ENCODE measurements at regions of chr15 and their contacts with region 1.

Region 1: DNA sequence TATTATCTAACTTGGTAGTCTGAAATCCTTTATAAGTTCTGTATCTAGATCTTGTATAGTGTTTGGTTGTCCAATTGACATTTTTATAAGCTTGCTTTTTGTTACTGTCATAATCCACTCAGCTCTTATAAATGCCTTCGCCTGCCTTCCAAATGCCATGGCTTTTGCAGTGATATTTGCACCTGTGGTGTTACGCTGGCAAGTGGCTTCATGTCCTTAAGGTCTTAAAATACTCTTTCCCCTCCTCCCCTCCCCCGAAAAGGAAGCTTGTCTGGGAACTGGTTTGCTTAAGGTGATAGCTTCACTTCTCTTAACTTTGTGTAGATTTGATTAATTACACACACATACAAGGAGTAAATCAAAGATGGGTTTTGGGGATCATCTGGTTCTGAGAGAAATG is 62.0 kb downstream of the ABHD2 start:
- DNase-seq: no peak
- H3K4me3 Mint-ChIP-seq: no peak overlapping the region
- H3K27ac Mint-ChIP-seq: no peak overlapping the region
- H3K4me1 Mint-ChIP-seq: no peaks in the 10 kb centered on the region
- H3K27me3 Mint-ChIP-seq: no peaks in the 10 kb centered on the region
- CTCF ChIP-seq: no peak

Region 2: GRCh38 chr15:88878720-88879184 is 271.5 kb before region 1 on chr15:
- CTCF ChIA-PET with region 1: no interaction called
- POLR2A ChIA-PET with region 1: no interaction called
- intact Hi-C with region 1: no loop called
- DNase-seq: peak; percentile 55
- H3K4me3 Mint-ChIP-seq: no peak overlapping the region
- H3K27ac Mint-ChIP-seq: no peak overlapping the region
- H3K4me1 Mint-ChIP-seq: no peaks in the 10 kb centered on the region
- H3K27me3 Mint-ChIP-seq: no peaks in the 10 kb centered on the region
- CTCF ChIP-seq: peak; percentile 52

Region 3: GRCh38 chr15:89129123-89129815 is 21.0 kb before region 1 on chr15:
- CTCF ChIA-PET with region 1: interaction called, 12 read pairs
- POLR2A ChIA-PET with region 1: interaction called, 3 read pairs
- intact Hi-C with region 1: no loop called
- DNase-seq: peak; percentile 60
- H3K4me3 Mint-ChIP-seq: no peak overlapping the region
- H3K27ac Mint-ChIP-seq: no peak overlapping the region
- H3K4me1 Mint-ChIP-seq: peaks cover 5% of the 10 kb centered on the region
- H3K27me3 Mint-ChIP-seq: no peaks in the 10 kb centered on the region
- CTCF ChIP-seq: peak; percentile 65

Region 4: DNA sequence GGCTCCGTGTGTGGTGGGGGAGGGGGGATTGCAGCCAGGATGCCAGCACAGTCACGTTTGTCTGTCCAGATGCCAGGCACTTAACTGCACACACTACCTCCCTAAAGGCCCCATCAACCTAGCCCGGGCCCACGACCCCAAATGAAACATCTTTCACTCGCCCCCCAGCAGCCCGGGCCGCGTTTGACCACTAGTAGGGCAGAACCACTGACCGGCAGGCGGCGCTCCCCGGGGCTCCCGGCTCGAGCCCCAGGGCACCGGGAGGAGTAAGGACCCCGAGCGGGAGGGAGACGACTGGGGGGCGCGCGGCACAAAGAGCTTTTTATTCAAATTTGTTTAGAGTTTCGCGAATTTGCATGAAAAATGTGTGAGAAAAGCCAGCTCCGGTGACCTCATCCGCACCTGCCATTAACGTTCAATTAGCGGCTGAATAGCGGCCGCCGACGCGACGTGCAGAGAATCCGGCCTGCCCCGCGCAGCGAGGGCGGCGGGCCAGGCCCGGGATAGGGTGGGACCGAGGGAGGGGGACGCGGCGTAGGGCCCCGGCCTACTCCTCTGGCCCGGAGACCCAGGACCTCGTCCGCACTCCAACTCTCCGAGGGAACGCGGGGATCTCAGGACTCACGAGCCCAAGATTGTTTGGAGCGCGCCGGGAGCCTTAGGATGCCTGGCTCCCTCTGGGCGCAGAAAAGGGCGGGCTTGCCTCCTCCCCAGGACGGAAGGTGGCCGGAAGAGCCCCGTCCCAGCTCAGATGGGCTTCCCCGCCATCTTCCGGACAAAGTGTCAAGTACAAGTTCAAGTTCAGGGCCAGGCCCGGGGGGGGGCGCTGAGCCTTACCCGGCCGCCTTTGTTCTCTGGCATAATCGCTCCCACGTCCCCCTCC is 249.2 kb after region 1 on chr15:
- CTCF ChIA-PET with region 1: no interaction called
- POLR2A ChIA-PET with region 1: no interaction called
- intact Hi-C with region 1: no loop called
- DNase-seq: no peak
- H3K4me3 Mint-ChIP-seq: no peak overlapping the region
- H3K27ac Mint-ChIP-seq: no peak overlapping the region
- H3K4me1 Mint-ChIP-seq: peaks cover 26% of the 10 kb centered on the region
- H3K27me3 Mint-ChIP-seq: no peaks in the 10 kb centered on the region
- CTCF ChIP-seq: peak; percentile 13